Common myeloid progenitor, CD34-positive (primary cell): ENCODE measurements at regions of chr11 and their contacts with region 1.

Region 1: DNA sequence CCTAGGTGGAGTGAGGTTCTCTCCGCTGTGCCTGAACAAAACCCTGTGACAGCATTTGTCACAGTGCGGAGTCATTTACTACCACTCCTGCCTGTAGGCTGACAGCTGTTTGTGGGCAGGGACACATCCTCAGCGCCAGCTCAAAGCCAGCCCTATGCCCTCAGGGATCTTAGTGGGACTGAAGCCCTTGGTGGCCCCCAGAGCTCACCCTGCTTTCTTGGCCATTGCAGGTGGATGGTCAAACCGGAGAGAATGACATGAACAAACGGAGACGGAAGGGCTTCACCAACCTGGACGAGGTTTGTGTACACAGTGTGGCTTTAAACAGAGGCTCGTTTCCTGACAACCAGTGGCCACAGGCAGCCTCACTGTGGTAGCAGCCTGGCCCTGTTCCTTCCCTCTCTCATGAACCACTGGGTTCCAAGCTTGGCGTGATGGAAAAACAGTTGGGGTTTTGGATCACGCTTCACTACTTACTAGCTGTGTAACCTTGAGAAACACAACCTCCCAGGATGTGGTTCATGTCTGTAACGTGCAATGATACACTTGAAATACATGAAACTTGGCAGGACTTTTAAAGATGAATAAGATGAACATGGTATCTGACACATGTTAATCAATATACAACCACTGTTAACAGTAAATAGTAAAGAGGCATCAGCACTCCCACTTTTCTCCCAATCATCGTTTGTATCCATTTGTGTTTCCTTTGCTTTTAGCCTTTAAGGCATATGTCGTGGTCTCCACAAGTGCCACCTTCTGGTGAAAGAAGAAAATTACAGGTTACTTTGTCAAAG is 125.8 kb downstream of the MICAL2 start:
- DNase-seq: peak; percentile 60 to 92 (median 91)
- H3K4me3 ChIP-seq: peak overlapping the region in 1 of 7 experiments; percentile 26
- H3K27ac ChIP-seq: peak overlapping the region; percentile 40 to 51
- H3K4me1 ChIP-seq: peaks cover 6 to 47% (median 43%) of the 10 kb centered on the region in 4 experiments
- H3K27me3 ChIP-seq: no peaks in the 10 kb centered on the region

Region 2: DNA sequence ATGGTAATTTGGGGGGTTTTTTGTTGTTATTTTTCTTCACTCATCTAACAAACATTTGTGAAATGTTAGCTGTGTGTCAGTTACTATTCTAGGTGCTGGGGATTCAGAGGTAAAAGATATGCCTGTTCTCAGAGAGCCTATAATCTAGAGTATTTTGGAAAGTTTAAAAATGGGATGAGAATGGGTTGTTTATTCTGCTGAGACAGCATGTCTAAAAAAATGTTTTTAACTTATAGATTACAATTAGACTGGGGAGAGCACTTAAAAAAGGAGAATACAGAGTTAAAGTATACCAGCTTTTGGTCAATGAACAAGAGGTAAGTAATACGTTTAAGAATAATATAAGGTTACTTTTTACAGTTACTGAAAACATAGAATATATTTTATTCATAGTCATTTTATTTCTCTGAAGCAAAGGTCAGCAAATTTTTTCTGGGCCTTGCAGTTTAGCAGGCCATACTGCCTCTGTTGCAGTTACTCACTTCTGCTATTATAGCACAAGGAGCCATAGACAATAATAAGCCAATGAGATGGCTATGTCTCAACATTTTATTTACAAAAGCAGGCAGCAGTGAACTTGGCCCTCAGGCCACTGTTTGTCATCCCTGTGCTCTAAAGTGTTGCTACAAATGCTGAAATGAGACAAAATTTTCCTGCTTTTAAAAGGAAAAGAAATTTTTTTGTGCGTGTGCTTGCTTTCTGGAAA is 287.8 kb before region 1 on chr11:
- CTCF ChIA-PET with region 1: no interaction called
- POLR2A ChIA-PET with region 1: no interaction called
- DNase-seq: no peak
- H3K4me3 ChIP-seq: no peak overlapping the region
- H3K27ac ChIP-seq: no peak overlapping the region
- H3K4me1 ChIP-seq: no peaks in the 10 kb centered on the region
- H3K27me3 ChIP-seq: no peaks in the 10 kb centered on the region

Region 3: GRCh38 chr11:12050470-12051286 is 185.5 kb before region 1 on chr11:
- CTCF ChIA-PET with region 1: interaction called, 10 read pairs
- POLR2A ChIA-PET with region 1: no interaction called
- DNase-seq: peak in 2 of 3 donors; percentile 58 to 67
- H3K4me3 ChIP-seq: no peak overlapping the region
- H3K27ac ChIP-seq: no peak overlapping the region
- H3K4me1 ChIP-seq: peaks cover 0 to 12% (median 9%) of the 10 kb centered on the region in 4 experiments
- H3K27me3 ChIP-seq: no peaks in the 10 kb centered on the region

Region 4: GRCh38 chr11:12110201-12110713 is 125.9 kb before region 1 on chr11 and contains the start of gene MICAL2:
- CTCF ChIA-PET with region 1: interaction called, 14 read pairs
- POLR2A ChIA-PET with region 1: no interaction called
- DNase-seq: peak; percentile 82 to 92 (median 89)
- H3K4me3 ChIP-seq: peak within 1 kb of the TSS in 6 of 7 experiments; percentile 23 to 75 (median 61)
- H3K27ac ChIP-seq: no peak within 1 kb of the TSS
- H3K4me1 ChIP-seq: peaks cover 0 to 21% (median 16%) of the 10 kb centered on the region in 4 experiments
- H3K27me3 ChIP-seq: peaks cover 0 to 2% (median 0%) of the 10 kb centered on the region in 5 experiments

Region 5: GRCh38 chr11:12134236-12134585 is 101.9 kb before region 1 on chr11:
- CTCF ChIA-PET with region 1: interaction called, 17 read pairs
- POLR2A ChIA-PET with region 1: no interaction called
- DNase-seq: peak in 2 of 3 donors; percentile 66 to 68
- H3K4me3 ChIP-seq: peak overlapping the region in 3 of 7 experiments; percentile 30 to 39 (median 39)
- H3K27ac ChIP-seq: no peak overlapping the region
- H3K4me1 ChIP-seq: peaks cover 0 to 24% (median 11%) of the 10 kb centered on the region in 4 experiments
- H3K27me3 ChIP-seq: no peaks in the 10 kb centered on the region

Region 6: DNA sequence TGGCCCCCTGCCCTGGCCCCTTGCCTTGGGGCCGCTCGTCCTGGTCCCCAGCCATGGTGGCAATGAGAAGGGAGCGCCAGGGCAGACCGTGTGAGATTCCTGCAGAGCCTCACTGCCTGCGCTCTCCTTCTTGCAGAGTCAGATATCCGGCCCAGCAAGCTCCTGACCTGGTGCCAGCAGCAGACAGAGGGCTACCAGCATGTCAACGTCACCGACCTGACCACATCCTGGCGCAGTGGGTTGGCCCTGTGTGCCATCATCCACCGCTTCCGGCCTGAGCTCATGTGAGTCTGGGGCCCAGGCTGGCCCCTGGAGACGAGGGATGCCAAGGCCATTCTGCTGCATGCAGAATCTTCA is 11.6 kb before region 1 on chr11:
- CTCF ChIA-PET with region 1: interaction called, 86 read pairs
- POLR2A ChIA-PET with region 1: interaction called, 4 read pairs
- DNase-seq: peak; percentile 98 to 99 (median 99)
- H3K4me3 ChIP-seq: peak overlapping the region in 4 of 7 experiments; percentile 21 to 59 (median 39)
- H3K27ac ChIP-seq: peak overlapping the region; percentile 19 to 53
- H3K4me1 ChIP-seq: peaks cover 14 to 46% (median 43%) of the 10 kb centered on the region in 4 experiments
- H3K27me3 ChIP-seq: no peaks in the 10 kb centered on the region

Region 7: GRCh38 chr11:12281571-12282478 is 45.7 kb after region 1 on chr11:
- CTCF ChIA-PET with region 1: interaction called, 10 read pairs
- POLR2A ChIA-PET with region 1: no interaction called
- DNase-seq: peak; percentile 60 to 78 (median 71)
- H3K4me3 ChIP-seq: no peak overlapping the region
- H3K27ac ChIP-seq: no peak overlapping the region
- H3K4me1 ChIP-seq: peaks cover 0 to 5% (median 2%) of the 10 kb centered on the region in 4 experiments
- H3K27me3 ChIP-seq: peaks cover 0 to 5% (median 0%) of the 10 kb centered on the region in 5 experiments